Cardiac septum (tissue), 1 donor: ENCODE measurements at regions of chr12 and their contacts with region 1.

Region 1: GRCh38 chr12:117236456-117237001 is 46.3 kb upstream of the FBXO21 start:
- DNase-seq: peak; percentile 80

Region 2: DNA sequence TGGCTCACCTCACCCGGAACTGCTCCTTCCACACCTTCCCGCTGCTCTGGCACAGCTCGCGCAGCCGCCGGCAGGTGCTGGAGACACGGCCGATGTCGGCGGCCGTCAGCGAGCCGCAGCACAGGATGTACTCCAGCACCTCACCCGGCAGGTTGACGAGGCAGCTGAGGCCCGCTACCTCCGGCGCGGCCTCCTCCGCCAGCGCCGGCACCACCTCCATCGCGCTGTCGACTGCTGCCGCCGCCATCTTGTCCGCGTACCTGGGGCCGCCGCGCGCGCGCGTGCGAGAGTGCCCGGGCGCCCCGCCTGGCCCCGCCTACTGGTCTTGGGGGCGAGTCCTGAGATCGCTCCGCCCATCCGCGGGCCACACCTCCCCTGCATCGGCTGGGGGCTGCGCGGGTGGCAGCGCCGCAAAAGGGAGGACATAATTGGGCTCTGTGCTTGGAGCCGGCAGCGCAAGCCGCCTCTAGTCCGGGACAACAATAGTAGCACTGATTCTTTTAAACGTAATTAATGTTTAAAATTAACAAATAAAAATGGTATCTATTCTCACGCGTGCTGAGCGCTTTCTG is 46.2 kb before region 1 on chr12 and contains the start of gene FBXO21:
- intact Hi-C with region 1: no loop called
- DNase-seq: peak; percentile 94
- total RNA-seq, gene FBXO21: 51.9 TPM

Region 3: DNA sequence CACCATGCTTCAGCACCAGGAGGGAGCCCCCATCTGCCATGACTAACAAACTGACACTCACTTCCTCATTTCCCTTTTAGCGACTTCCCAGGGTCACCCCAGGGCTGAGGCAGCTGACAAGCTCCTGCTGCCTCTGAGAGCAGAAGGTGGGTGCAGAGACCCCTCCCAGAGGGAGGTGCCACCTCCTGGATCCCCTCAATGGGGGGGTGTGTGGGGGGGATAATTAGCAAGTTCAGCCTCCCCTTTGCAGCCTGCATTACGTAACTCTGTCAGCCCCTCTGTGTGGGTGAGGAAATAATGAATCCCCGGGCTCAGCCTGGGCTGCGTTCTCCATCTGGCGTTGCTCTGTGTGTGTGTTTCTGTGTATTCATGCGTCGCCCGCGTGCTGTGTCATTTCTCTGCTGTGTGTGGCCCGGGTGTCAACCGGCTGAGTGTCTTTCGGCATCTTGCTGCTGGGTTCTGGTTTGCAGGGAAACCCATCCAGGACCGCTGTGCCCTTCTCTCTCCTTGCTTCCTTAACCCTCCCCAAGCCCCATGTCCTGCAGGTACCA is 96.9 kb after region 1 on chr12:
- intact Hi-C with region 1: no loop called
- DNase-seq: no peak

Region 4: GRCh38 chr12:117367011-117367638 is 130.6 kb after region 1 on chr12:
- intact Hi-C with region 1: loop called (anchors 2 kb)
- DNase-seq: peak; percentile 80

Region 5: GRCh38 chr12:117587631-117588287 is 351.2 kb after region 1 on chr12:
- intact Hi-C with region 1: loop called (anchors 10 kb)
- DNase-seq: no peak

Region 6: DNA sequence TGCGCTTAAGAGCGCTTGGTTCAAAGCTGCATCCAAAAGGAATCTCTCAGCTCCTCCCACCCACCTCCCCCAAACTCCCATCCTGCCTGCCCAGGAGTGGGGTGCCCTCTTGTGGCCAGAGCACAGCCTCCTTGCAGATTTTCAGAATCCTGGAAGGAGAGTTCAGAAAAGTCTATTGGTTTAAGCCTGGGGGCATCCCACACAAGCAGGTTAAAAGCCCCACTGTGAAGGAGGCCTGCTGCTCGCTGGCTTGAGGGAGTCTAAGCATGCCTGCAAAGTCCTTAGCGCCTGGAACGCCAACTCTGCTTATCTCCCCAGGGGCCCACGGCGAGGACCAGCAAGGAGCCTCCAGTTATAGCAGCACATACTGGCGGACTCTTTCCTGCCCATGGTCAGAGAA is 435.2 kb after region 1 on chr12:
- intact Hi-C with region 1: loop called (anchors 10 kb)
- DNase-seq: no peak

Region 7: DNA sequence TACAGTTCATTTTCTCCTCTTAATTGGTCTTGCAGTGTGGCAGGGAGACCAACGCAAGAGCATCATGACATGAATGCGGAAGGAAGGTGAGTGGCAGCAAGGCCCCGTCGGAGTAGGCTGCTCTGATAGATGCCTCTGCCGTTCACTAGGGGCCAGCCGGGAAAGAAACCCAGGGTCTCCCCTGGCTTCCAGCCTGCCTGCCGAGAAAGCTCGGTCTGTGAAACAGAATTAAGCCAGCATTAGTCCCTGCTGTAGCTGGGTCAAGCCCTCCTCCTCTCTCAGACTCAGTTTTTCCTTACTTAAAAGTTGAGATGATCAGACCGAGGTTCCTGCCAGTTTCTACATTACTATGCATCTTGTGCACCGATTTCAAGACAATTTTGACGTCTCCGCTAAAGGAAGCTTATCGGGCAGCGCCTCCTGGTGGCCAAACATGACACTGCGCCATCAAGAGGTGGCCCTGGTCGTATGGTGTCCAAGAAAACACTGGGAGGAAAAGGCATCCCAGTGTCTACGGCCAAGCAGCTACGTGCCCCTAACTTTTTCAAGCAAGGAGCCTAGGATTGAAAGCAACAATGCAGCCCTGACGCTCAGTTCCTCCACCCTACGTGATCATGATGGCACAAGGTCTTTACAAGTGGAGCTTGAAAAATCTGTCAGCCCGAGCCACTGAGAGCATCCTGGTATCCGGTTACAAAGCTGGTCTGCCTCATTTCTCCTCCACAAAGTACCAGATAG is 600.6 kb after region 1 on chr12:
- intact Hi-C with region 1: loop called (anchors 5 kb)
- DNase-seq: peak; percentile 82